PC-9 (cell line): ENCODE measurements at regions of chr17 and their contacts with region 1.

Region 1: DNA sequence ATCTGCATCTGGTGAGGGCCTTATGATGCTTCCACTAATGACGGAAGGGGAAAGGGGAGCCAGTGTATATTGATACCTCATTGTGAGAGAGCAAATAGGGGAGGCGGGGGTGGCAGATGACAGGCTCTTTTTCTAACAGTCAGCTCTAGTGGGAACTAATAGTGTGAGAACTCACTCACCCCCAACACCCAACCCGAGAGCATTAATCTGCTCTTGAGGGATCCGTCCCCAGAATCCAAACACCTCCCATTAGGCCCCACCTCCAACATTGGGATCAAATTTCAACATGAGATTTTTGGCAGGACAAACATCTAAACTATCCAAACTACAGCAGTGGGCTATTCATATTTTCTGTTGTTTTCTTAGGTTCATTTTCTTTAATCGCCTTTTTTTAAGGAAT is 54.4 kb downstream of the BPTF start:
- DNase-seq: no peak
- H3K4me3 ChIP-seq: no peak overlapping the region
- H3K27ac ChIP-seq: no peak overlapping the region
- H3K4me1 ChIP-seq: no peaks in the 10 kb centered on the region
- H3K27me3 ChIP-seq: no peaks in the 10 kb centered on the region
- CTCF ChIP-seq: no peak

Region 2: DNA sequence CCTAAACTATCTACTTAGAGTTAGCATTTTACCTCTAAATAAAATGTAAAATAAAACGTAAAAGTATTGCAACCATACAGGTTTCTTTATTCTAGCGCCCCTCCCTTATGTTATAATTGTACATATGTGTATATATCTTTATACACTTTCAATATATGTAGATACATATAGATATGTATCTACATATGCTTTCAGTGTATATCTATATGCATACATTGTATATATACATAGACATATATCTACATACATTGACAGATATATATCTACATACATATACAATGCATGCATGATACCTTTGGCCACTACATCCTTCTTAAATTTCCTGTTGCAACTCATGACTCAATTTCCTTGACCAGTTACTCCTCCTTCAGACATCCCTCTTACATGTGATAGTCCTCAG is 37.7 kb before region 1 on chr17:
- CTCF ChIA-PET with region 1: no interaction called
- POLR2A ChIA-PET with region 1: interaction called, 22 read pairs
- intact Hi-C with region 1: no loop called
- DNase-seq: no peak
- H3K4me3 ChIP-seq: no peak overlapping the region
- H3K27ac ChIP-seq: no peak overlapping the region
- H3K4me1 ChIP-seq: no peaks in the 10 kb centered on the region
- H3K27me3 ChIP-seq: no peaks in the 10 kb centered on the region
- CTCF ChIP-seq: no peak

Region 3: DNA sequence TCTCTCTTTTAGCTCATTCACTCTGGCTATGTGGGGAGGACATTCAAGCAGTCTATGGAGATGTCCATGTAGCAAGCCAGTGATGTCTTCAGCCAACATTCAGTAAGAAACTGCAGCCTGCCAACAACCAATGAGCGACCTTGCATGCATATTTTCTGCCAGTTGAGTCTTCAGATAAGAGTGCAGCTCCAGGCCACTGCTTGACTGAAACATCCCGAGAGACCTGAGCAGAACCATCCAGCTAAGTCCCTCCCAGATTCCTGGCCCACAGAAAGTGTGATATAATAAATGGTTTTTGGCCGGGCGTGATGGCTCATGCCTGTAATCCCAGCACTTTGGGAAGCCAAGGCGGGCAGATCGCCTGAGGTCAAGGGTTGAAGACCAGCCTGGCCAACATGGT is 127.1 kb after region 1 on chr17:
- CTCF ChIA-PET with region 1: no interaction called
- POLR2A ChIA-PET with region 1: no interaction called
- intact Hi-C with region 1: no loop called
- DNase-seq: no peak
- H3K4me3 ChIP-seq: no peak overlapping the region
- H3K27ac ChIP-seq: no peak overlapping the region
- H3K4me1 ChIP-seq: no peaks in the 10 kb centered on the region
- H3K27me3 ChIP-seq: no peaks in the 10 kb centered on the region
- CTCF ChIP-seq: no peak